ENCODE measurements at regions of chr6 and their contacts with region 1.

Region 1: DNA sequence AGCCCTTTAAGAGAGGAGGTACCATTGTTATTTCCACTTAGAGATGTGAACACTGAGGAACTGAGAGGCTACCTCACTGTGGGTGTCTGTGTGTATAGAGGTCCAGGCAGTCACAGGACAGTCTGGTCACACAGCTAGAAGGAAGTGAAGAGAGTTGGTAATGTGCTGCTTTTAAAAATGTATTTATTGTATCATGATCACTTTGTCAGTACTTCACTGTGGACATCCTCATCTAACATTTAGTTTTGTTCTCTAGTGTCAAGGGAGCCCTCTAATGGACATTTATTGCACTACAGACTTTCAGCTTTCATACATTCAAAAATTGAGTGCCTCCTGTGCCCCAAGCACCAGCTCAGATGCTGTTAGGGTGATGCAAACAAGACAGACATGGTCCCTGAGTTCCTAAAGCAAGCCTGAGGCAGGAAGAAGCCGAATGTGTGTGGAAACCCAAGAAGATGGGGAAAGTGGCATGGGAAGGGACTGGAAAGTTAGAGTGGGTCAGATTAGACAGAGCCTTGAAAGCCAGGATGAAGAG is 123.0 kb downstream of the SLC16A10 start:
- DNase-seq: peak; percentile 60
- ATAC-seq: peak; percentile 81
- H3K4me3 ChIP-seq: no peak overlapping the region
- H3K27ac ChIP-seq: no peak overlapping the region
- H3K4me1 ChIP-seq: peaks cover 11% of the 10 kb centered on the region
- H3K27me3 ChIP-seq: no peaks in the 10 kb centered on the region
- CTCF ChIP-seq: peak; percentile 80
- EP300 ChIP-seq: no peak
- POLR2A ChIP-seq: no peak
- RAD21 ChIP-seq: peak; percentile 73

Region 2: DNA sequence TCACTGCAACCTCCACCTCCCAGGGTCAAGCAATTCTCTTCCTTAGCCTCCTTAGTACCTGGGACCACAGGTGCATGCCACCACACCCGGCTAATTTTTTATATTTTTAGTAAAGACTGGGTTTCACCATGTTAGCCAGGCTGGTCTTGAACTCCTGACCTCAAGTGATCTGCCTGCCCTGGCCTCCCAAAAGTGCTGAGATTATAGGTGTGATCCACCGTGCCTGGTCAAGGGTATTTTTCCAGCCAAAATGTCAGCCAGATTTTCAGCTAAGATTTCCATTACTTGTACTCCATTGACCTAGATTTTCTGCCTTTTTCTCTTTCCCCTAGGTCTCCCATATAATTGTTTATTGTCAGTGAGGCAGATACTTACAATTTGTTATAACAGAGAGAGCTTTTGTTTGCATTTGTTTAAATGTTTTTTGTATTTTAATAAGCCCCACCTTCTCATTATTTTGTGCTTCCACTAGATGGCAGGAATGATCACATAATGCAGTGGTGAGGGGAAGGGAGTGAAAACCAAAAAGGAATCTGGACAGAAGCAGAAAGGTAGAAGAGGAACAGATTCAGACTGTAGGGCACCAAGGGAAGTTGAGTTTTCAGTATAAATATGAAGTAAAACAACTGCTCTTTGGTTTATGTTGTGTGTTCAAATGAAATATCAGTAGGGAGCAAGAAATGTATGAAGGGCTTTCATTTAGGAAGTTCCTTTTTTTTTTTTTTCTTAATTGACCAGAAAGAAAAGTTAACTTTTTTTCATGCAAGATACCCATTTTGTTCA is 198.7 kb before region 1 on chr6:
- CTCF ChIA-PET with region 1: interaction called, 18 read pairs
- POLR2A ChIA-PET with region 1: no interaction called
- in situ Hi-C with region 1: no loop called
- intact Hi-C with region 1: loop called (anchors 1 kb)
- DNase-seq: peak; percentile 32
- ATAC-seq: peak; percentile 82
- H3K4me3 ChIP-seq: no peak overlapping the region
- H3K27ac ChIP-seq: no peak overlapping the region
- H3K4me1 ChIP-seq: no peaks in the 10 kb centered on the region
- H3K27me3 ChIP-seq: no peaks in the 10 kb centered on the region
- CTCF ChIP-seq: peak; percentile 69
- EP300 ChIP-seq: no peak
- POLR2A ChIP-seq: no peak
- RAD21 ChIP-seq: peak; percentile 41; the same call in 1 of the 2 replicates

Region 3: GRCh38 chr6:111057074-111057752 is 153.0 kb before region 1 on chr6:
- CTCF ChIA-PET with region 1: interaction called, 40 read pairs
- POLR2A ChIA-PET with region 1: no interaction called
- in situ Hi-C with region 1: loop called (anchors 5 kb)
- intact Hi-C with region 1: loop called (anchors 1 kb)
- DNase-seq: peak; percentile 32
- ATAC-seq: peak; percentile 90
- H3K4me3 ChIP-seq: no peak overlapping the region
- H3K27ac ChIP-seq: no peak overlapping the region
- H3K4me1 ChIP-seq: peaks cover 3% of the 10 kb centered on the region
- H3K27me3 ChIP-seq: no peaks in the 10 kb centered on the region; a peak in 1 of 5 replicates
- CTCF ChIP-seq: peak; percentile 71
- EP300 ChIP-seq: no peak
- POLR2A ChIP-seq: no peak
- RAD21 ChIP-seq: peak; percentile 67

Region 4: GRCh38 chr6:111087106-111087835 is 123.0 kb before region 1 on chr6 and contains the start of gene SLC16A10:
- CTCF ChIA-PET with region 1: no interaction called
- POLR2A ChIA-PET with region 1: no interaction called
- in situ Hi-C with region 1: no loop called
- intact Hi-C with region 1: loop called (anchors 10 kb)
- DNase-seq: peak; percentile 65
- ATAC-seq: peak; percentile 88
- H3K4me3 ChIP-seq: peak within 1 kb of the TSS; percentile 67 to 85 (median 85)
- H3K27ac ChIP-seq: peak within 1 kb of the TSS; percentile 53
- H3K4me1 ChIP-seq: peaks cover 45% of the 10 kb centered on the region
- H3K27me3 ChIP-seq: no peaks in the 10 kb centered on the region
- CTCF ChIP-seq: no peak
- EP300 ChIP-seq: no peak
- POLR2A ChIP-seq: peak; percentile 91 to 94
- RAD21 ChIP-seq: peak; percentile 61; the same call in 1 of the 2 replicates
- total RNA-seq, gene SLC16A10: 11.3 and 20.1 TPM in 2 replicates

Region 5: GRCh38 chr6:111162504-111162903 is 47.8 kb before region 1 on chr6:
- CTCF ChIA-PET with region 1: no interaction called
- POLR2A ChIA-PET with region 1: no interaction called
- in situ Hi-C with region 1: no loop called
- intact Hi-C with region 1: no loop called
- DNase-seq: no peak
- ATAC-seq: no peak
- H3K4me3 ChIP-seq: no peak overlapping the region
- H3K27ac ChIP-seq: no peak overlapping the region
- H3K4me1 ChIP-seq: no peaks in the 10 kb centered on the region
- H3K27me3 ChIP-seq: no peaks in the 10 kb centered on the region
- CTCF ChIP-seq: no peak
- EP300 ChIP-seq: no peak
- POLR2A ChIP-seq: no peak
- RAD21 ChIP-seq: no peak

Measured in HepG2 (cell line).